K562 (cell line): ENCODE measurements at regions of chr5 and their contacts with region 1.

Region 1: GRCh38 chr5:122415030-122415800 is 103.2 kb downstream of the SNCAIP start:
- DNase-seq: peak; percentile 7 to 49 (median 15)
- ATAC-seq: peak; percentile 98
- H3K4me3 ChIP-seq: no peak overlapping the region
- H3K27ac ChIP-seq: no peak overlapping the region
- H3K4me1 ChIP-seq: no peaks in the 10 kb centered on the region
- H3K27me3 ChIP-seq: no peaks in the 10 kb centered on the region; a peak in 1 of 5 replicates
- CTCF ChIP-seq: peak; percentile 53 to 63 (median 55)
- EP300 ChIP-seq: no peak
- POLR2A ChIP-seq: no peak
- RAD21 ChIP-seq: peak; percentile 11 to 58; a peak in 2 of 4 replicates

Region 2: GRCh38 chr5:122192497-122193496 is 222.4 kb before region 1 on chr5:
- CTCF ChIA-PET with region 1: interaction called, 5 read pairs
- POLR2A ChIA-PET with region 1: no interaction called
- in situ Hi-C with region 1: no loop called
- intact Hi-C with region 1: loop called (anchors 1 kb)
- DNase-seq: peak; percentile 42 to 74 (median 48)
- ATAC-seq: peak; percentile 95
- H3K4me3 ChIP-seq: no peak overlapping the region
- H3K27ac ChIP-seq: no peak overlapping the region
- H3K4me1 ChIP-seq: peaks cover 0 to 5% of the 10 kb centered on the region in 2 experiments; a peak in 2 of 5 replicates
- H3K27me3 ChIP-seq: no peaks in the 10 kb centered on the region
- CTCF ChIP-seq: peak; percentile 44 to 68 (median 51); a peak in 4 of 6 replicates
- EP300 ChIP-seq: no peak
- POLR2A ChIP-seq: no peak
- RAD21 ChIP-seq: peak; percentile 46 to 65

Region 3: DNA sequence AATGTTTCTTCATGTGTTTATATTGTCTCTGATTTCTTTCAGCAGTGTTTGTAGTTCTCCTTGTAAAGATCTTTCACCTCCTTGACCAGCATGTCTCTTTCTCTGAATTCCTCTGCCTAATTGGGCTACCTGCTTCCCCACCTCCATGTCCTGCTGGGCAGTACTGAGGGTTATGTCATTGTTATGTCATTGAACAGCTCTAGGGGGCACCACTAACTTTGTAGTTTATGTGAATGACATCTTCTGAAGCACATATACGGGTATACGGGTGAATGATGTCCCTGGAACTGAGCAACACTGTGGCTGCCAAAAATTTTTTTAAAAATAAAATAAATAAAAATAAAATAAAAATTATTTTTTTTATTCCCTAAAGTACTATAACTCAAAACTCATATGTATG is 120.1 kb before region 1 on chr5:
- CTCF ChIA-PET with region 1: no interaction called
- POLR2A ChIA-PET with region 1: no interaction called
- in situ Hi-C with region 1: no loop called
- intact Hi-C with region 1: loop called (anchors 1 kb)
- DNase-seq: peak; percentile 12 to 22 (median 18)
- ATAC-seq: peak; percentile 85
- H3K4me3 ChIP-seq: no peak overlapping the region
- H3K27ac ChIP-seq: no peak overlapping the region
- H3K4me1 ChIP-seq: no peaks in the 10 kb centered on the region
- H3K27me3 ChIP-seq: no peaks in the 10 kb centered on the region
- CTCF ChIP-seq: peak; percentile 20 to 33 (median 27); a peak in 2 of 6 replicates
- EP300 ChIP-seq: no peak
- POLR2A ChIP-seq: no peak
- RAD21 ChIP-seq: no peak

Region 4: DNA sequence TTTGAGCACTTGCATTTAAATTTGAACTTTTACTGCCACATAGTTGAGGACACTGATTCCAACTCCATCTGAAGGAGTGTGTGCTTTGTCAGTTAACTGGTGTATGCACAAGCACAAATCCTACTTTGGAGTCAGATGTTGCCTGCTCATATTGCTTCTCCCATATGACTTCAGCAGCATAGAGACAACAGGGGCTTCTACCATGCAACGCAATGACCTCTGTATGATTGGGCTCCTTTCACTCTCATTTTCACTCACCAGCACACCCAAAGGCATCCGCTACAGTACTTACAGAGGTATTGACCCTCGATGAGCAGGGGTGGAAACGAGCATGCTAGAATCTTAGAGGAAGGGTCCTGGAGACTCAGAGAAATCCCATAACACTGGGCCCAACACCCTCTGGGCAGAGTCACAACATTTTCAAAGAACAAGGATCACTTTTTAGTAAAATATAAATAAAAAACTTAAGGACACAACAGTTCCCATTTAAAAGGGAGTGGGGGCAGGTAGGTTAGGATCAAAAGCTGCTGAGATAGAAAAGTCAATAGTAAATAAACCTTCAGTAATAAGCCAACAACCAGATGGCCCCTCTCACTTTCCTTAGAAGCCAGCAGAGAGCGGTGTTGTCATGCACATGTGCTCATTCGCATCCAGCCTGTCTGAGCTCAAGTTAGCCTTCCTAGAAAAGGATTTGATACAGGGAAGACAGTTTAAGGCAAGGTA is 100.7 kb after region 1 on chr5:
- CTCF ChIA-PET with region 1: no interaction called
- POLR2A ChIA-PET with region 1: no interaction called
- in situ Hi-C with region 1: no loop called
- intact Hi-C with region 1: no loop called
- DNase-seq: peak; percentile 29 to 63 (median 36)
- ATAC-seq: peak; percentile 92
- H3K4me3 ChIP-seq: no peak overlapping the region
- H3K27ac ChIP-seq: no peak overlapping the region
- H3K4me1 ChIP-seq: no peaks in the 10 kb centered on the region
- H3K27me3 ChIP-seq: no peaks in the 10 kb centered on the region; a peak in 1 of 5 replicates
- CTCF ChIP-seq: peak; percentile 63 to 80 (median 67)
- EP300 ChIP-seq: no peak
- POLR2A ChIP-seq: no peak
- RAD21 ChIP-seq: peak; percentile 84 to 89

Region 5: DNA sequence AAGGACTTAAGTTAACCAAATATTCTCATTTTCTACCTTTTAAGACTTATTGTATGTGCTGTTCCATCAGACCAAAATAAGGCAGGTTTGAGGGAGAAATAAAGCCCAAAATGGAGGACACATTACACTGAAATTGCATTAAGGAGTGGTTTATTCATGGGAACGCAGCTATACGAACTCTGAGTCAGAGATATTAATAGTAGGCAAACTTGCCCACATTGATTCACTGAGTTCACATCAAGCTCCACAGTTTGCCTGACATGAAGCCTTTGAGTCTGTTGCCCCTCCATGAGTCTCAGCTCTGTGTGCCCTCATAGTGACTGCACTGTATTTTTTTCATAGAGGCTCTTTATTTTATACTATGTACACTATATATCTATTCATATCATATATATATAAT is 224.6 kb after region 1 on chr5:
- CTCF ChIA-PET with region 1: no interaction called
- POLR2A ChIA-PET with region 1: no interaction called
- in situ Hi-C with region 1: no loop called
- intact Hi-C with region 1: no loop called
- DNase-seq: no peak
- ATAC-seq: no peak
- H3K4me3 ChIP-seq: no peak overlapping the region
- H3K27ac ChIP-seq: no peak overlapping the region
- H3K4me1 ChIP-seq: no peaks in the 10 kb centered on the region
- H3K27me3 ChIP-seq: no peaks in the 10 kb centered on the region
- CTCF ChIP-seq: no peak
- EP300 ChIP-seq: no peak
- POLR2A ChIP-seq: no peak
- RAD21 ChIP-seq: no peak